ENCODE measurements at regions of chr1 and their contacts with region 1.

Region 1: GRCh38 chr1:40425198-40425597 is 25.1 kb upstream of the ZFP69B start:
- DNase-seq: no peak
- H3K4me3 ChIP-seq: no peak overlapping the region
- H3K4me3 Mint-ChIP-seq: no peak overlapping the region
- H3K27ac ChIP-seq: no peak overlapping the region
- H3K27ac Mint-ChIP-seq: peak overlapping the region in 4 of 8 donors; percentile 10 to 41 (median 24)
- H3K4me1 ChIP-seq: no peaks in the 10 kb centered on the region
- H3K4me1 Mint-ChIP-seq: peaks cover 5 to 14% (median 6%) of the 10 kb centered on the region in 3 donors
- H3K27me3 ChIP-seq: no peaks in the 10 kb centered on the region
- H3K27me3 Mint-ChIP-seq: peaks cover 0 to 1% of the 10 kb centered on the region in 2 donors

Region 2: GRCh38 chr1:40167317-40167716 is 257.9 kb before region 1 on chr1:
- CTCF ChIA-PET with region 1: no interaction called
- POLR2A ChIA-PET with region 1: interaction called, 15 read pairs
- DNase-seq: no peak
- H3K4me3 ChIP-seq: no peak overlapping the region
- H3K4me3 Mint-ChIP-seq: peak overlapping the region in 1 of 7 donors; percentile 3
- H3K27ac ChIP-seq: no peak overlapping the region
- H3K27ac Mint-ChIP-seq: peak overlapping the region in 1 of 8 donors; percentile 7
- H3K4me1 ChIP-seq: peaks cover 52% of the 10 kb centered on the region
- H3K4me1 Mint-ChIP-seq: peaks cover 14 to 35% (median 28%) of the 10 kb centered on the region in 3 donors
- H3K27me3 ChIP-seq: no peaks in the 10 kb centered on the region
- H3K27me3 Mint-ChIP-seq: no peaks in the 10 kb centered on the region